ENCODE measurements at regions of chr4 and their contacts with region 1.

Region 1: DNA sequence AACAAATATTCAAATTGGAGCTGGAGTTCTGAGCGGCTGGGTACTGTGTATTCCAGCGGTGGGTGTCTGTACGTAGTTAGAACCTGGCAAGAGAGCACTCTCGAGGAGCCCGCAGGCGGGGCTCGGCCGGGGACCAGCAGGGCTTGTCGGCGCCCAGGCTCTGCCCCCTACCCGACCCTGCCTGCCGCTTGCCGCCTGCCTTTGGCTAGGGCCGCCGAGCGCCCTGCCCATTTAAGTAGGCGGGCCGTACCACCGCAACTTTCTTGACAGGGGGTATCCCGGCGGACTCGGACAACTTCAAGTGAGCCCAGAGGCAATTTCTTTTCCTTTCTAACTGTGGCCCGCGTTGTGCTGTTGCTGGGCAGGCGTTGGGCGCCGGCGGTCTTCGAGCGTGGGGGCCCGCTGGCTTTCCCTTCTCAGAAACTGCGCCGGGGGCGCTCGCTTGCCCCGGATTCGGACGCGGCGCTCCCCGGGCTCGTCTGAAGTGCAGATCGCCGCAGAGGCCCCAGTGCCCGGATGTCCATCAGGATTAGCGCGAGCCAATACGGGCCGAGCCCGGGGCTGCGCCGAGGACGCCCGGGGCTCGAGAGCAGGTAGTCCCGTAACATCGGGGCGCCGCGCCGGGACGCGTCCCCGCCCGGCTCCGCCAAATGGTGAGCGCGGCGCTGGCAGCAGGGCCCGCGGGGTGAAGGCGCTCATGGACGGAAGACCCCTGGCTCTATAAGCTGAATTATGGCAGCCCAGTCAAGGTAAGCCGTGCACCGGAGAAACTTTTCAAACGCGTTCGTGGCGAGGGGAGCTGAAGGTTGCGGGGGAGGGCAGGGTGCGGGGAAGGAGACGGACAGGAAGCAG is 72.1 kb downstream of the AFF1 start:
- DNase-seq: peak; percentile 94
- H3K4me3 ChIP-seq: peak overlapping the region; percentile 61 to 73 (median 64)
- H3K27ac ChIP-seq: peak overlapping the region; percentile 94 to 98 (median 97)
- H3K4me1 ChIP-seq: peaks cover 19 to 56% (median 45%) of the 10 kb centered on the region in 4 donors
- H3K27me3 ChIP-seq: no peaks in the 10 kb centered on the region
- CTCF ChIP-seq: peak in 4 of 5 experiments; percentile 26 to 75 (median 50)
- EP300 ChIP-seq: no peak
- POLR2A ChIP-seq: peak; percentile 99

Region 2: DNA sequence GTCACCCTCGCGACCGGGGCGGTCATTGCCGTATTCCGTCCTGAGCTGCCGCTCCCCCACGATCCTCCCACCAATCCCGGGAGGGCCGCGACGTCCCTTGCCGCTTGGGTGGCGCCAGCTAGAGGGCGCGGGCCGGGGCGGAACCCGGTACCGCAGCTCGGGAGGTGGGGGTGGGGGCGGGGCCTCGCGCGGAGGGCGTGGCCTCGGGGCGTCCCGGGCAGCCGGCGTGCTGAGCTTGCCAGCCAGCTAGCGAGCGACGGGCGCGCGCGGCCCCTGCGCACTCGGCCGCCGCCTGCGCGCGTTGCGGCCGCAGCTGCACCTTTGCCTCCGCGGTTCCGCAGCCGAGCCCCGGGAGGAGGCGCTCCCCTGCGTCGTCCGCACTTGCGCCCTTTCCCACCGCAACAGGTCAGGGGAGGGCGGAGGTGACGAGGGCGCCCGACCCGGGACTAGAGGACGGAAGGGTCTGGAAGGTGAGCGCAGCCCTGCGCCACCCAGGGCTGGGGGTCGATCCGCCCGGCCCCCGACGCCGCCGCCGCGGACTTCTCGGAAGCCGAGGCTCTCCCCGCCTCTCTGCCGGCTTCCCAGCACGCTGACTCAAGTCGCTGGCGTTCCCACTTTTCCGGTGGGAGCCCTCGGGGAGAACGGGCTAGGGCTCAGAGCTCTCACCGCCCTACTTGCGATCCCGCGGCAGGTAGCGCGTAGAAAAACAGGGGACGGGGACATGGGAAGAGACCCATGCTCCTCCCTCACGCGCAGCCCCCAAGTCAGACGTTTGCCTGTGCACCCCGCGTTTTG is 71.9 kb before region 1 on chr4 and contains the start of gene AFF1:
- in situ Hi-C with region 1: loop called in 2 of 4 experiments (anchors 5 to 10 kb)
- intact Hi-C with region 1: loop called (anchors 2 kb)
- DNase-seq: peak; percentile 96
- H3K4me3 ChIP-seq: peak within 1 kb of the TSS; percentile 81 to 97 (median 94)
- H3K27ac ChIP-seq: peak within 1 kb of the TSS; percentile 99 to 100 (median 99)
- H3K4me1 ChIP-seq: peaks cover 25 to 50% (median 43%) of the 10 kb centered on the region in 4 donors
- H3K27me3 ChIP-seq: no peaks in the 10 kb centered on the region
- CTCF ChIP-seq: peak; percentile 39 to 57 (median 44)
- EP300 ChIP-seq: no peak
- POLR2A ChIP-seq: peak; percentile 84
- total RNA-seq, gene AFF1: 77.1 to 151 (median 97.0) TPM

Region 3: GRCh38 chr4:87058356-87059073 is 51.6 kb after region 1 on chr4:
- in situ Hi-C with region 1: no loop called
- intact Hi-C with region 1: loop called (anchors 10 kb)
- DNase-seq: no peak
- H3K4me3 ChIP-seq: no peak overlapping the region
- H3K27ac ChIP-seq: peak overlapping the region; percentile 71 to 84 (median 78)
- H3K4me1 ChIP-seq: peaks cover 53 to 80% (median 75%) of the 10 kb centered on the region in 4 donors
- H3K27me3 ChIP-seq: no peaks in the 10 kb centered on the region
- CTCF ChIP-seq: peak in 2 of 5 experiments; percentile 17 to 32
- EP300 ChIP-seq: no peak
- POLR2A ChIP-seq: no peak

Region 4: DNA sequence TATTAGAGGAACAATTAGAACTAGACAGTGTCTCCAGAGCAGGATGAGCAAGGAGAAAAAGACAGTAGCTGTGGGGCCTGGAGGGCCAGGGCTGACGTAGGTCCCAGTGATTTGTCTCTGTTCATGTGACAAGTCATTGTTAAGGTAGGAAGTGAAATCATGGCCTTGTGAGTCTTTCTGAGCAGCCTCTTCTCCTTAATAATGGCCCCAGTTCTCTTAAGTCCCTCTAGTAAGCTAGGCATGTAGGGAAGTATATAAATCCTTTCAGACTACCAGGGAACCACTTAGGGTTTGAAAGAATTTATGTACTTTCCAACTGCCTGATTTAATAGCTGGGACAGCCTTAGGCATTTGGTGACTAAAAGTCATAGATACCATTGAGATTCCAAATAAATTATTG is 80.5 kb after region 1 on chr4:
- in situ Hi-C with region 1: no loop called
- intact Hi-C with region 1: loop called (anchors 10 kb)
- DNase-seq: no peak
- H3K4me3 ChIP-seq: no peak overlapping the region
- H3K27ac ChIP-seq: peak overlapping the region in 2 of 4 donors; percentile 3 to 5
- H3K4me1 ChIP-seq: peaks cover 9 to 34% (median 19%) of the 10 kb centered on the region in 4 donors
- H3K27me3 ChIP-seq: no peaks in the 10 kb centered on the region
- CTCF ChIP-seq: no peak
- EP300 ChIP-seq: no peak
- POLR2A ChIP-seq: no peak

Region 5: DNA sequence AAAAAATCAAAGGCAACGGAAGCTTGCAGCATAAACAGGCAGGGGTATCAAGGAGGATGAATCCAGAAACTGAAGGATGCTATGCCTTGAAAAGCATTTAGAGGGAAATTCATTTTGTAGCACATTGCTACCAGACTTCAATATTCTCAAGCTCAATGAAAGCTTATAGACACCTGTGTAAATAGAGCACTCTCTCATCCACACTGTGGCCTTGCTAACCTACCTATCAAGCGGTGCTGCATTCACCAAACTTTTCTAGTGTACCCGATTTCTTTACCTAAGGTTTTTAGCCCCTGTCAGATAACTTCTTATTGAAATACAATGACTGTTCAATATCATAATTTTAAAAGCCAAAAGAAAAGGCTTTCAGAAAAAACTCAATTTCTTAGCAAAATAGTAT is 336.0 kb after region 1 on chr4:
- in situ Hi-C with region 1: no loop called
- intact Hi-C with region 1: no loop called
- DNase-seq: no peak
- H3K4me3 ChIP-seq: no peak overlapping the region
- H3K27ac ChIP-seq: no peak overlapping the region
- H3K4me1 ChIP-seq: no peaks in the 10 kb centered on the region
- H3K27me3 ChIP-seq: no peaks in the 10 kb centered on the region
- CTCF ChIP-seq: no peak
- EP300 ChIP-seq: no peak
- POLR2A ChIP-seq: no peak